ENCODE measurements at regions of chr11 and their contacts with region 1.

Region 1: DNA sequence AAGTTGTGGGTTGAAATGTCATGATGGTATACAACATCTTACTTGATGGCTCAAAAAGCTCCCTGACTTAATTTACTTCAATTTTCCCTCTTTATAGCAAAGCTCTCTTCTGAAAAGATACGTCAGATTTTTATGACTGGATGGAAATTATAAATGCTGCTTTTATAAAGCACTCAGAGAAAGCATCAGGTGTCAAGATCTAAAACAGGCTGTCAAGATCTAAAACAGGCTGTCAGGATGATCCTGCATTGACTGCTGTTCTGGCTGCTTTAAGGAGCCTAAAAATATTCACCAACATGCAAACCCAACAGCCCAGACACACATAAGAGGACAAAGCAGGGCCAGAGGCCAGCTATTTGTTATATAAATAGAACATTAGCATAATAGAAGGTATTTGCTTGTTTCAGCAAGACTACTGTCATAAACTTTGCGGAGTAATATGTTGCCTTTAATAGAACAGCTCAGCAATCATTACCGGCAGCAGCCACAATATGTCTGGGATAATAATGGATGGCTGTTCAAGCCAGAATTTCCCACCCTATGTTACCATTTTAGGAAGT is 77.3 kb upstream of the ANO5 start:
- DNase-seq: no peak
- H3K4me3 ChIP-seq: no peak overlapping the region
- H3K27ac ChIP-seq: no peak overlapping the region
- H3K4me1 ChIP-seq: no peaks in the 10 kb centered on the region
- H3K27me3 ChIP-seq: no peaks in the 10 kb centered on the region
- CTCF ChIP-seq: no peak
- POLR2A ChIP-seq: no peak

Region 2: GRCh38 chr11:20321177-20321576 is 1794.4 kb before region 1 on chr11:
- intact Hi-C with region 1: loop called (anchors 5 kb)
- DNase-seq: no peak
- H3K4me3 ChIP-seq: no peak overlapping the region
- H3K27ac ChIP-seq: no peak overlapping the region
- H3K4me1 ChIP-seq: no peaks in the 10 kb centered on the region
- H3K27me3 ChIP-seq: no peaks in the 10 kb centered on the region
- CTCF ChIP-seq: no peak
- POLR2A ChIP-seq: no peak

Measured in vagina (tissue), 2 donors.